ENCODE measurements at regions of chr6 and their contacts with region 1.

Region 1: DNA sequence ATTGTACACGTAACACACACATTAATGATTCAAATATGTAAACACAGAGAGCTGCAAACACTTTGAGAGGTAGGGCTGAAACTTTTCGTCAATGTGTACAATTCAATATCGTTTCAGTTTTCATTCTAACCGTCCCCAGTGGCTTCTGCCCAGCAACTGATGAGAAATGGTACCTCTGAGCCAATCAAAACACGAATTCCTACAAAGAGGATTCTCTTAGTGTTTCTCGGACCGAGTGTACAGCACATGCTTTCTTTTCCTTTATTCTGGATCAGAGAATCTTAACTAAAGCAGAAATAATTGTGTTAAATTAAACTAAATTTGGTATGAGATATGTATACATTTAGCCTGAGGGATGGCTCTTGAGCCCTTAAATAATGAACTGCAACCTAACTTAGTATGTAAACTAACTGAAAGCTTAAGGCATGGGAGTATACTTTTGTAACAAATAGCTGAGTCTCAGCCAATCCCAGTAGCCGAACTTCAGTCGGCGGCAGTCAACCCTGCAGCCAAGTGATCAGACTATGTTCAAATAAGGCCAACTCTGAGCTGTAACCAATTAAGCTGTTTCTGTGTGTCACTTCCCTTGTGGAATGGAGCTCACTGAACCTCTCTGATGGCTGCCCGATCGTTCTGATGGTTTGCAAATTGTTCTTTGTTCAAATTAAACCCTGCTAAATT is 16.1 kb downstream of the BTN2A1 start:
- DNase-seq: peak; percentile 79 to 95
- ATAC-seq: peak; percentile 91 to 97 (median 95)
- H3K4me3 ChIP-seq: peak overlapping the region; percentile 67
- H3K4me3 Mint-ChIP-seq: peak overlapping the region; percentile 99
- H3K27ac ChIP-seq: peak overlapping the region; percentile 99
- H3K27ac Mint-ChIP-seq: peak overlapping the region; percentile 94 to 99
- H3K4me1 ChIP-seq: peaks cover 40% of the 10 kb centered on the region
- H3K4me1 Mint-ChIP-seq: peaks cover 39% of the 10 kb centered on the region in 2 donors
- H3K27me3 ChIP-seq: no peaks in the 10 kb centered on the region
- H3K27me3 Mint-ChIP-seq: no peaks in the 10 kb centered on the region
- CTCF ChIP-seq: no peak

Region 2: GRCh38 chr6:25851961-25852360 is 621.9 kb before region 1 on chr6:
- intact Hi-C with region 1: no loop called
- DNase-seq: no peak
- ATAC-seq: no peak
- H3K4me3 ChIP-seq: no peak overlapping the region
- H3K4me3 Mint-ChIP-seq: no peak overlapping the region
- H3K27ac ChIP-seq: no peak overlapping the region
- H3K27ac Mint-ChIP-seq: no peak overlapping the region
- H3K4me1 ChIP-seq: no peaks in the 10 kb centered on the region
- H3K4me1 Mint-ChIP-seq: peaks cover 5 to 6% of the 10 kb centered on the region in 2 donors
- H3K27me3 ChIP-seq: no peaks in the 10 kb centered on the region
- H3K27me3 Mint-ChIP-seq: peaks cover 4 to 6% of the 10 kb centered on the region in 2 donors
- CTCF ChIP-seq: no peak

Region 3: GRCh38 chr6:26366504-26366903 is 107.4 kb before region 1 on chr6:
- intact Hi-C with region 1: loop called (anchors 1 kb)
- DNase-seq: peak in 1 of 2 donors; percentile 37
- ATAC-seq: no peak
- H3K4me3 ChIP-seq: peak overlapping the region; percentile 74
- H3K4me3 Mint-ChIP-seq: no peak overlapping the region
- H3K27ac ChIP-seq: no peak overlapping the region
- H3K27ac Mint-ChIP-seq: no peak overlapping the region
- H3K4me1 ChIP-seq: peaks cover 41% of the 10 kb centered on the region
- H3K4me1 Mint-ChIP-seq: peaks cover 52 to 56% of the 10 kb centered on the region in 2 donors
- H3K27me3 ChIP-seq: no peaks in the 10 kb centered on the region
- H3K27me3 Mint-ChIP-seq: no peaks in the 10 kb centered on the region
- CTCF ChIP-seq: no peak

Region 4: DNA sequence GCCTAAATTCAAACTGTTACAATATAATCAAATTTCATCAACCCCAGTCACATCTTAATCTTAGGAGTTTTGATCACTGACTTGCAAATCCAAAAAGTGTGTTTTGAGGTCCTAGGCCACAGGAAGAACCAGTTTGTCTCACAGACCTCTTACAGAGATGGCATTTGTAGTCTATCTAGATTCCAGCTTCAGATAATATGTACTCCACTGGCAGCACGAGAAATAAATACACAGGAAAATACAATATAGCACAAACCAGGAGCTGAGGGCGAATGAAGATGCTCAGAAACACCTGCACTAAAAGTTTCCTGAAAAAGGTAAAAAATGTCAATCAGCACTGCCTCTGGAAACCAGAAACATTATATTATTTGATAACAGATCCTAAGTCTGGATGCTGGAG is 34.2 kb before region 1 on chr6:
- intact Hi-C with region 1: loop called (anchors 1 kb)
- DNase-seq: peak in 1 of 2 donors; percentile 55
- ATAC-seq: no peak
- H3K4me3 ChIP-seq: peak overlapping the region; percentile 90
- H3K4me3 Mint-ChIP-seq: peak overlapping the region; percentile 97
- H3K27ac ChIP-seq: peak overlapping the region; percentile 97
- H3K27ac Mint-ChIP-seq: peak overlapping the region; percentile 99 to 100
- H3K4me1 ChIP-seq: peaks cover 15% of the 10 kb centered on the region
- H3K4me1 Mint-ChIP-seq: peaks cover 42 to 45% of the 10 kb centered on the region in 2 donors
- H3K27me3 ChIP-seq: no peaks in the 10 kb centered on the region
- H3K27me3 Mint-ChIP-seq: no peaks in the 10 kb centered on the region
- CTCF ChIP-seq: no peak

Region 5: DNA sequence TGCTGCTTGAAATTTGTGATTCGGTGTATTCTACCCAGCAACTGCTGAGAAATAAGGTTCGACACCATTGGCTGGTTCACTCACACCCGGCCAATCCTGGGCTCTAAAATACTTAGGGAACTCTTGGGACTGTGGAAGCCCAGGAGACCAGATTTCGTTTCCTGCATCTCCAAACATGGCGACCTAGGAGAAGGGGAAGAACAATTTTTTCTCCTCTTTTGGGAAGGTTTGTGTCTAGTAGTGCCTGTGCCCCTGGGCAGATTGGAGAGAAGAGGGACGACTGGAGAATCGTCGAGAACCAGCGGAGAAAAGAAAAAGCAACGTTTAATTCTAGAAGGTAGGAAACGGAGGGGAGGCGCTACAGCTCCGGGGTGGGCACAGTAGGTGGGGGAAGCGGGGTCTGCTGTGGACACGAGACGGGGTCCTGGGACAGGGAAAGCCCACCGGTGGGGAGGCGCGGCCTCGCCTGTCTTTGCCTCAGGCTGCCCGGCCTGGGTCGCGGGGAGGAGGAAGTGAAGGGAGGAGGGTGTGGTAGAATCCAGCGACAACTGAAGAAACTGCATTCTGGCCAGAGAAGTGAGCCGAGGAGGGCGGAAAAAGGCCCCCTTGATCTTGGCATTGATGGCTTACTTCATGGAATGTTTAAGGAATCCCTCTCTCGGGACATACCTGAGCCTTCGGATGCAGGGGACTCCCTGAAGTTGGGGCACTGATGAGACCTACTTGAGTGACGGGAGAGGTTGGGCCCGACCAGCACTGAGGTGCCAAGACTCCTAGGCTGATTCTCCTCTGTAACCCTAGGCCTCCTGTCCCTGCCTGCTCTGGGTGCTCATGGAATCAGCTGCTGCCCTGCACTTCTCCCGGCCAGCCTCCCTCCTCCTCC is 15.9 kb before region 1 on chr6 and contains the start of gene BTN2A1:
- intact Hi-C with region 1: loop called (anchors 1 kb)
- DNase-seq: peak; percentile 54 to 92
- ATAC-seq: peak; percentile 97 to 98 (median 98)
- H3K4me3 ChIP-seq: peak within 1 kb of the TSS; percentile 93
- H3K4me3 Mint-ChIP-seq: peak within 1 kb of the TSS; percentile 100
- H3K27ac ChIP-seq: peak within 1 kb of the TSS; percentile 82
- H3K27ac Mint-ChIP-seq: peak within 1 kb of the TSS; percentile 95 to 97
- H3K4me1 ChIP-seq: peaks cover 35% of the 10 kb centered on the region
- H3K4me1 Mint-ChIP-seq: peaks cover 59 to 63% of the 10 kb centered on the region in 2 donors
- H3K27me3 ChIP-seq: no peaks in the 10 kb centered on the region
- H3K27me3 Mint-ChIP-seq: no peaks in the 10 kb centered on the region
- CTCF ChIP-seq: no peak
- total RNA-seq, gene BTN2A1: 33.8 to 51.2 (median 43.3) TPM

Region 6: DNA sequence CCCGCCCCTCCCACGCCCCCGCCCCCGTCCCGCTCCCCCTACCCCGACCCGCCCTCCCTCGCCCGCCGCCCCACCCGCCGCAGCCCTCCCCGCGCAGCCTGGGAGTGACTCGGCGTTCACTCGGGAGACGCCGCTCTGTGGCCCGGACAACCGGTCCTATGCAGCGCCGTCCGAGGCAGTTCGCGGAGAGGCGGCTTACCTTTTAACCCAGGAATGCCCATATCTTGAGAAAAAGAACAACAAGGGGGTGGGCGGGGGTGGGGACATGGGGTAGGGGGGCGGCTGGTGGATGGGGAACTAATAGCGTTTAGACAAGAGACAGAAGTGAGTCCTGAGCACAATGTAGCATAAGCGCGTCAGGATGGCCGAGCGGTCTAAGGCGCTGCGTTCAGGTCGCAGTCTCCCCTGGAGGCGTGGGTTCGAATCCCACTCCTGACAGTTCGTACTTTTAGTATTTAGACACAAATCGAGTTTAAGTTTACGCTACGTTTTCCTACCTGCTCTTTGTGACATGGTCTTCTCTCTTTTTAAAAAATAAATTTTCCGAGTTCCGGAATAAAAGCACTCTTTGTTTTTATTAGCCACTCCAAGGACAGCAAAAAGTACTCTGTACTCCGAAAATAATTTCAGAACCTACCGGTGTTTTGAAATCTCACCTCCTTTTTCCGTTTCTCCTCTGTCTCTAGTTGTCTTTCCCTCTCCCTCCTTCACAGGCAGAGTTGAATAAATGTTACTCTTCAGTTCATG is 47.1 kb after region 1 on chr6:
- intact Hi-C with region 1: loop called (anchors 1 kb)
- DNase-seq: peak; percentile 84 to 94
- ATAC-seq: peak; percentile 70 to 88 (median 73)
- H3K4me3 ChIP-seq: peak overlapping the region; percentile 85
- H3K4me3 Mint-ChIP-seq: peak overlapping the region; percentile 89
- H3K27ac ChIP-seq: peak overlapping the region; percentile 91
- H3K27ac Mint-ChIP-seq: peak overlapping the region; percentile 89 to 96
- H3K4me1 ChIP-seq: peaks cover 13% of the 10 kb centered on the region
- H3K4me1 Mint-ChIP-seq: peaks cover 26 to 30% of the 10 kb centered on the region in 2 donors
- H3K27me3 ChIP-seq: no peaks in the 10 kb centered on the region
- H3K27me3 Mint-ChIP-seq: no peaks in the 10 kb centered on the region
- CTCF ChIP-seq: no peak

Region 7: DNA sequence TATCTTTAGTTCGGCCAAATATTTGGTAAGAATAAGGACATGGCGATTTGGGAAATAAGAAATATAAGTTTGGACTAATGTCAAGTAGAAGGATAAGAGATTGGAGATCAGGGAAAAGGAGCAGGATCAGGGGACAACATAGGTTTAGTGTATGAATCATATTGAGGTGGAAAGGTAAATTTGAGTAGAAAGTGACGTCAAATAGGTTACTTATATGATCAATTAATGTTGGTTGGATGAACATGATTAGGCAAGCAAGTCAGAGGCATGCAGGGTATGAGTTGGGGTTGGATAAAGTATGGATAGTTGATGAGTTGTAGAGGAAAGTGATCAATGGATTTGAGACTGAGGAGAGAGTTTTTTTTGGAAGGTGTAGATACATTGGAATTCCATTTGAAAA is 188.7 kb after region 1 on chr6:
- intact Hi-C with region 1: no loop called
- DNase-seq: no peak
- ATAC-seq: no peak
- H3K4me3 ChIP-seq: no peak overlapping the region
- H3K4me3 Mint-ChIP-seq: no peak overlapping the region
- H3K27ac ChIP-seq: no peak overlapping the region
- H3K27ac Mint-ChIP-seq: no peak overlapping the region
- H3K4me1 ChIP-seq: peaks cover 2% of the 10 kb centered on the region
- H3K4me1 Mint-ChIP-seq: peaks cover 16 to 18% of the 10 kb centered on the region in 2 donors
- H3K27me3 ChIP-seq: peaks cover 20% of the 10 kb centered on the region
- H3K27me3 Mint-ChIP-seq: peaks cover 38 to 42% of the 10 kb centered on the region in 2 donors
- CTCF ChIP-seq: no peak